Activated T-helper 2 cell treated with anti-CD3 and anti-CD28 coated beads, Interferon-gamma antibody, Interleukin-2, Interleukin-4, amounts not matched to agents 10 μg/mL and 5 μg/mL and 100 μg/mL, durations not matched to agents 14 hours and 24 hours and 36 hours (primary cell): ENCODE measurements at regions of chr16 and their contacts with region 1.

Region 1: GRCh38 chr16:19521471-19522396 is at the start of gene GDE1:
- DNase-seq: peak; percentile 90
- H3K4me3 Mint-ChIP-seq: peak within 1 kb of the TSS; percentile 97
- H3K27ac Mint-ChIP-seq: peak within 1 kb of the TSS; percentile 90
- H3K4me1 Mint-ChIP-seq: peaks cover 54% of the 10 kb centered on the region
- H3K27me3 Mint-ChIP-seq: no peaks in the 10 kb centered on the region
- total RNA-seq, gene GDE1: 32.4 and 32.8 TPM in 2 replicates

Region 2: GRCh38 chr16:18801197-18801972 is 720.3 kb before region 1 on chr16 and contains the start of gene ARL6IP1:
- intact Hi-C with region 1: loop called (anchors 5 kb)
- DNase-seq: peak; percentile 99
- H3K4me3 Mint-ChIP-seq: peak within 1 kb of the TSS; percentile 93
- H3K27ac Mint-ChIP-seq: peak within 1 kb of the TSS; percentile 98
- H3K4me1 Mint-ChIP-seq: peaks cover 52% of the 10 kb centered on the region
- H3K27me3 Mint-ChIP-seq: no peaks in the 10 kb centered on the region
- total RNA-seq, gene ARL6IP1: 112 TPM in 2 replicates

Region 3: GRCh38 chr16:19067349-19068236 is 454.1 kb before region 1 on chr16 and contains the start of gene COQ7:
- intact Hi-C with region 1: loop called (anchors 1 kb)
- DNase-seq: peak; percentile 98
- H3K4me3 Mint-ChIP-seq: peak within 1 kb of the TSS; percentile 88
- H3K27ac Mint-ChIP-seq: peak within 1 kb of the TSS; percentile 88
- H3K4me1 Mint-ChIP-seq: peaks cover 5% of the 10 kb centered on the region
- H3K27me3 Mint-ChIP-seq: no peaks in the 10 kb centered on the region
- total RNA-seq, gene COQ7: 19.5 and 19.7 TPM in 2 replicates

Region 4: DNA sequence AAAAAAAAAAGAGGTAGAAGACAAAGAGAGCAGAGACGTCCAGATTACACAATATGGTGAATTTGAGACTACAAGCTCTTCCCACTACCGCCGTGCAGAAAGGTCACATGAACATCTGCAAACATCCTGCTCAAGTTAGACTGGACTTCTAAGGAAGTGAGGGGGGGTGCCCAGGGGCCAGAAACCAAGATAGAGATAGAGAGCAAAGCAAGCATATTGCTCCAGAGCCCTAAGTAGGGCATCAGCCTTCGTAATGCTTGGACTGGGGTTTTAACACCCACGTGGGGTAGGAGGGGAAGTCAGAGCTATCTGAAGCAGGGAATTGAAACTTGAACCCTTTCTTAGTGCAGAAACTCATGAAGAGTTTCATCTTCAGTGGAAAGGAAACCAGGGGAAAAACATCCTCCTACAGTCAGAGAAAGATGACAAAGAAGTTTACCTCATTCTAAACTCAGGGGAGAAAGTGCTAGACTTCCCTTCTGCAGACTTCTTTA is 227.5 kb before region 1 on chr16:
- intact Hi-C with region 1: loop called (anchors 5 kb)
- DNase-seq: peak; percentile 22
- H3K4me3 Mint-ChIP-seq: peak overlapping the region; percentile 17
- H3K27ac Mint-ChIP-seq: peak overlapping the region; percentile 83
- H3K4me1 Mint-ChIP-seq: peaks cover 30% of the 10 kb centered on the region
- H3K27me3 Mint-ChIP-seq: no peaks in the 10 kb centered on the region

Region 5: DNA sequence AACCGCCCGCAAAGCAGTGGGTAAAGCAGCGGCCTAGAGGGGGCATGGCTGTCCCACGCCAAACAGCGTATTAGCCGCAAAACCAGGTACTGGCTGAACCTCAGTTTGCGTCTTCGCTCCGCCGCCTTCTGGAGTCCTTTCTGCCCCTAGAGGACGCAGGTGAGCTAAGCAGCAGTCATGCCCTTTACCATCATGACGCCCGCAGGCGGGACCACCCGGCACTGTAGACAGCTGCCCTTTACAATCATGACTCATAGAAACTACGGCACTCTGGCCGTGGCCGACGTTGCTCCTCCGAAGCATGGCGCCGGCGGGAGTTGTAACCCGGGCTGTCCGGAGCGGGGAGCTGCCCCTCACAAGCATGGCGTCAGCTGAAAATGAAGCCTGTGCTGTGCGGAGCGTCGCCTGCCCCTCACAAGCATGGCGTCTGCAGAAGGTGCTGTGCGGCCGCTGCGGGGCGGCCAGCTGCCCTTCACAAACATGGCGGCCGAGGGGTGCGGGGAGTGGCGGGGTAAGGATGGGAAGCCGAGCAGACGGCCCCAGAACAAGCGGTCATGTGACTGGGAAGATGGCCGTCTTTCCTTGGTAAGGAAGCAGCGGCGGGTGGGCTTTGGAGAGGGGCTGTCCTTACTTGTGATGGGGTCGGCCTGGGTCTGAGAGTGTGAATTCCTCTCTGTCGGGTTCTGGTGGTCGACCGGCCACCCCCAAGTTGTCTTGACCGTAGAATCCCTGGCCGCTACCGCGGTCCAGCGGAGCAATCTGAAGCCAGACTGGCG is 33.6 kb after region 1 on chr16 and contains the start of gene VPS35L:
- intact Hi-C with region 1: loop called (anchors 1 kb)
- DNase-seq: peak; percentile 95
- H3K4me3 Mint-ChIP-seq: peak within 1 kb of the TSS; percentile 91
- H3K27ac Mint-ChIP-seq: peak within 1 kb of the TSS; percentile 88
- H3K4me1 Mint-ChIP-seq: peaks cover 14% of the 10 kb centered on the region
- H3K27me3 Mint-ChIP-seq: no peaks in the 10 kb centered on the region
- total RNA-seq, gene VPS35L: 44.3 and 45.7 TPM in 2 replicates